ENCODE measurements at regions of chr17 and their contacts with region 1.

Region 1: GRCh38 chr17:4354862-4355514 is 11.5 kb downstream of the UBE2G1 start:
- DNase-seq: no peak
- H3K4me3 ChIP-seq: no peak overlapping the region
- H3K27ac ChIP-seq: no peak overlapping the region
- H3K27me3 ChIP-seq: no peaks in the 10 kb centered on the region
- CTCF ChIP-seq: no peak

Region 2: DNA sequence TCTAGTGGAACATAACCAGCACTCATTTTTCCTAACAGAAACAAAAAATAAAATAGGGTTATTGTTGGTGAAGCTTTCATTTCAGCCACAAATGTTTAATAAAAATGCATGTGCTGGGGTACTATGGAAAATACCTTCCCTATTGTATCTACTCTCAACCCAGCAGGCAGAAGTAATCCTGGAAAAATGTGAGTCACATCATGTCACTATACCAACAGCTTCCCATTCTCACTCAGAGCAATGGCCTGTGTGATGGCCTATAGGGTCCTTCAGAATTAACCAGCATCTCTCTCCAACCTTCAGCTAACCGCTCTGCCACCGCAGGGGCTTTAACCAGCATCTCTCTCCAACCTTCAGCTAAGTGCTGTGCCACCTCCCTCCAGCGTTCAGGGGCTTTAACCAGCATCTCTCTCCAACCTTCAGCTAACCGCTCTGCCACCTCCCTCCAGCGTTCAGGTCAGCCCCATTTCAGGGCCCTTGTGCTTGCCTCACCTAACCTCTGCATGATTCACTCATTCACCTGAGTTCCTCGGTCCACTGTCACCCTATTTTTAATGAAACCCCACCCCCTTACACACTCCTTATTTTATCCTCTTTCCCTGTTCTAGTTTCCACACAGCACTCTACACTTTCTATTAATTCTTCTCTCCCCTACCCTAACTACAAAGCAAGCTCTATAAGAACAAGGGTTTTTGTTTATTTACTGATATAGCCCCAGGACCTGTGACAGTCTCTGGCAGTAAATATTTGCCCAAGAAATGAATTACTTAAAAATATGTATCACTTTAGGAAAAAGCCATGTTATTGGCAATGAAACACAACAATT is 22.5 kb before region 1 on chr17:
- CTCF ChIA-PET with region 1: no interaction called
- POLR2A ChIA-PET with region 1: interaction called, 15 read pairs
- DNase-seq: no peak
- H3K4me3 ChIP-seq: no peak overlapping the region
- H3K27ac ChIP-seq: no peak overlapping the region
- H3K27me3 ChIP-seq: no peaks in the 10 kb centered on the region
- CTCF ChIP-seq: no peak

Region 3: DNA sequence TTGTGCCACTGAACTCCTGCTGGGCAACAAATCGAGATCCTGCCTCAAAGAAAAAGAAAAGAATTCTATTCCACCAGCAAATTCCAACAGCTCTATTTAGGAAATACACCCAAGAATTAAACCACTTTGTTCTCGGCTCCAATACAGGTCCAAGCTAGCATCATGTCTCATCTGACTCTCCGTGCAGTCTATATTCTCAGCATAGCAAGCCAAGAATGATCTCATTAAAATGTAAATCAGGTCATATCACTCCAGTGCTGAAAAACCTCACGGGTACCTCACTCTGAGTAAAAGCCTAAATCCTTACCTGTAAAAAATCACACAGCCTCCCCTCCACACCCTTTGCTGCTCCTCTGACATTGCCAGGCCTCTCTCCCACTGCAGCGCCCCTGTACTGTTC is 12.5 kb before region 1 on chr17:
- CTCF ChIA-PET with region 1: no interaction called
- POLR2A ChIA-PET with region 1: no interaction called
- DNase-seq: no peak
- H3K4me3 ChIP-seq: no peak overlapping the region
- H3K27ac ChIP-seq: no peak overlapping the region
- H3K27me3 ChIP-seq: no peaks in the 10 kb centered on the region
- CTCF ChIP-seq: no peak

Measured in AG04450 (cell line).